ENCODE measurements at regions of chr19 and their contacts with region 1.

Region 1: GRCh38 chr19:45657520-45658167 is 10.4 kb upstream of the GIPR start:
- DNase-seq: no peak
- H3K4me3 Mint-ChIP-seq: no peak overlapping the region
- H3K27ac Mint-ChIP-seq: no peak overlapping the region
- H3K4me1 Mint-ChIP-seq: peaks cover 8% of the 10 kb centered on the region
- H3K27me3 Mint-ChIP-seq: peaks cover 42% of the 10 kb centered on the region
- CTCF ChIP-seq: no peak

Region 2: GRCh38 chr19:44196772-44197171 is 1460.9 kb before region 1 on chr19:
- CTCF ChIA-PET with region 1: interaction called, 10 read pairs
- intact Hi-C with region 1: no loop called
- DNase-seq: no peak
- H3K4me3 Mint-ChIP-seq: no peak overlapping the region
- H3K27ac Mint-ChIP-seq: no peak overlapping the region
- H3K4me1 Mint-ChIP-seq: no peaks in the 10 kb centered on the region
- H3K27me3 Mint-ChIP-seq: no peaks in the 10 kb centered on the region
- CTCF ChIP-seq: no peak